ENCODE measurements at regions of chr10 and their contacts with region 1.

Region 1: GRCh38 chr10:70404036-70404786 is at the start of gene EIF4EBP2:
- DNase-seq: peak; percentile 95 to 99 (median 96)
- H3K4me3 ChIP-seq: peak within 1 kb of the TSS; percentile 32 to 78
- H3K4me3 Mint-ChIP-seq: peak within 1 kb of the TSS; percentile 92 to 98 (median 98)
- H3K27ac ChIP-seq: peak within 1 kb of the TSS; percentile 86
- H3K27ac Mint-ChIP-seq: peak within 1 kb of the TSS; percentile 87 to 97 (median 95)
- H3K4me1 ChIP-seq: peaks cover 32% of the 10 kb centered on the region
- H3K4me1 Mint-ChIP-seq: peaks cover 30 to 51% (median 40%) of the 10 kb centered on the region in 4 donors
- H3K27me3 ChIP-seq: no peaks in the 10 kb centered on the region
- H3K27me3 Mint-ChIP-seq: no peaks in the 10 kb centered on the region
- total RNA-seq, gene EIF4EBP2: 54.5 to 56.9 TPM

Region 2: DNA sequence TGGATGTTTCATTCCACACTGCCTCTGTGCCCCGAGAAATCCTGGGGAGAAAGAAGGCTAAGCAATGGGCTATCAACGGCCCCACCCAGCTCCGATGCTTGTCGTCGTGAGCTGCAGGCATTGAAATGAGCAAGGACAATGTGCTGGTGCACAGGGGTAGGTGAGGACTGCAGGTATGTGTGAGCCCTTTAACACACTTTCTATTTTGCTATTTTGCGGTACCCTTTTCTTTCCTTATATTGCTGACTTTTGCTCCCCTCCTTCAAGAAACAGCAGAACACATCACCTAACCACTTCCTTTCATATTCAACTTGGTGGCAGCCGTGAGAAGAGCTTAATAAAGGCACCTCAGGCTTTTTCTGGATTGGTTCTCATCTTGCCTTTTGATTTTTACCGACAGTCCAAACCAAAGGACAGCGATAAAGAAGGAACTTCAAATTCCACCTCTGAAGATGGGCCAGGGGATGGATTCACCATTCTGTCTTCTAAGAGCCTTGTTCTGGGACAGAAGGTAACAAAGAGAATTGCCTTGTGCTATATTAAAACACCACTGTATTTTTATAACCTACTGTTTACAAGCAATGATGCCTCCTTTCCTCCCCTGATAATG is 310.8 kb before region 1 on chr10:
- CTCF ChIA-PET with region 1: no interaction called
- POLR2A ChIA-PET with region 1: interaction called, 13 read pairs
- intact Hi-C with region 1: no loop called
- DNase-seq: peak; percentile 37 to 51 (median 44)
- H3K4me3 ChIP-seq: peak overlapping the region; percentile 26 to 62
- H3K4me3 Mint-ChIP-seq: peak overlapping the region; percentile 76 to 87 (median 84)
- H3K27ac ChIP-seq: peak overlapping the region; percentile 61
- H3K27ac Mint-ChIP-seq: peak overlapping the region; percentile 83 to 98 (median 94)
- H3K4me1 ChIP-seq: peaks cover 45% of the 10 kb centered on the region
- H3K4me1 Mint-ChIP-seq: peaks cover 25 to 46% (median 37%) of the 10 kb centered on the region in 4 donors
- H3K27me3 ChIP-seq: no peaks in the 10 kb centered on the region
- H3K27me3 Mint-ChIP-seq: no peaks in the 10 kb centered on the region

Region 3: DNA sequence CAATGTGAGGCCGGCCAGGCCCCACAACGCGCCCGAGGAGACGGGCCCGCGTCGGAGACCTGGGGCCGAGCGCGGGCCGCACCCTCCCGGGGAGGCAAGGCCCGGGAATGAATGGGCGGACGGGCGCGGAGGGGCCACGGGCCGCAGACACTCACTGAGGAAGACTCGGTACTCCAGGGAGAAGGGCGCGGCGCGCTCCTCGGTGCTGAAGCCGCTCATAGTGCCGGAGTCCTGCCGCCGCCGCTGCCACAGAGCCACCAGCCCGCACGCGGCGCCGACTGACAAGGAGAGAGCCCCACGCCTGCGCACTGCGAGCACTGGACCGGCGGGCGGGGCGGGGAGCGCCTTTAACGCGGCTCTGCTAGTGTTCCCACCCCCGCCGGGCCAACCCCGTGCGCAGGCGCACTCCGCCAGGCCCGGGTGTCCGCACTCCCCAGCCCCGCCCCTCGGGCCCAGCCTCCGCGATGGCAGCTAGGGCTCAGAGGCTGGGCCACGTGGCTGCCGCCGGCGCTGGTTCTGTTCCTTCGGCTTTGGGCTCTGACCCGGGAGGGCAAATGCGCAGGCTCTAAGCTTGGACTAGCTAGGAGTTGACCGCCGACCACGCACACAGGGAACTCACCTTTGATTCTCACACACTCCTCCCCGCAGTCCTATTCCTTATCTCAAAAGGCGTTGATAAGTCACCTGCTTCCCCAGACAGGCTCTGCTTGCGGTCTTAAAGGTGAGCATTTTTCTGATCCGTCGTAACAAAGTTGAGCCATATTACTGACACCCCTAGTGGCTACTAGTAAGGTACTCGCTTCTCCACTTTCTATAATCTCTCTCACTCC is 170.9 kb before region 1 on chr10 and contains the start of gene PPA1:
- CTCF ChIA-PET with region 1: interaction called, 4 read pairs
- POLR2A ChIA-PET with region 1: interaction called, 31 read pairs
- intact Hi-C with region 1: loop called (anchors 1 kb)
- DNase-seq: peak; percentile 98 to 100 (median 99)
- H3K4me3 ChIP-seq: peak within 1 kb of the TSS; percentile 67 to 77
- H3K4me3 Mint-ChIP-seq: peak within 1 kb of the TSS; percentile 89 to 94 (median 91)
- H3K27ac ChIP-seq: peak within 1 kb of the TSS; percentile 82
- H3K27ac Mint-ChIP-seq: peak within 1 kb of the TSS; percentile 88 to 97 (median 96)
- H3K4me1 ChIP-seq: peaks cover 20% of the 10 kb centered on the region
- H3K4me1 Mint-ChIP-seq: peaks cover 14 to 42% (median 29%) of the 10 kb centered on the region in 4 donors
- H3K27me3 ChIP-seq: no peaks in the 10 kb centered on the region
- H3K27me3 Mint-ChIP-seq: peaks cover 0 to 1% of the 10 kb centered on the region in 2 donors
- total RNA-seq, gene PPA1: 57.4 to 60.4 TPM

Region 4: GRCh38 chr10:70418229-70418628 is 14.0 kb after region 1 on chr10:
- CTCF ChIA-PET with region 1: interaction called, 3 read pairs
- POLR2A ChIA-PET with region 1: interaction called, 21 read pairs
- intact Hi-C with region 1: no loop called
- DNase-seq: no peak
- H3K4me3 ChIP-seq: no peak overlapping the region
- H3K4me3 Mint-ChIP-seq: peak overlapping the region in 1 of 8 donors; percentile 26
- H3K27ac ChIP-seq: no peak overlapping the region
- H3K27ac Mint-ChIP-seq: peak overlapping the region in 5 of 7 donors; percentile 19 to 72 (median 37)
- H3K4me1 ChIP-seq: peaks cover 9% of the 10 kb centered on the region
- H3K4me1 Mint-ChIP-seq: peaks cover 22 to 39% (median 30%) of the 10 kb centered on the region in 4 donors
- H3K27me3 ChIP-seq: no peaks in the 10 kb centered on the region
- H3K27me3 Mint-ChIP-seq: no peaks in the 10 kb centered on the region

Region 5: DNA sequence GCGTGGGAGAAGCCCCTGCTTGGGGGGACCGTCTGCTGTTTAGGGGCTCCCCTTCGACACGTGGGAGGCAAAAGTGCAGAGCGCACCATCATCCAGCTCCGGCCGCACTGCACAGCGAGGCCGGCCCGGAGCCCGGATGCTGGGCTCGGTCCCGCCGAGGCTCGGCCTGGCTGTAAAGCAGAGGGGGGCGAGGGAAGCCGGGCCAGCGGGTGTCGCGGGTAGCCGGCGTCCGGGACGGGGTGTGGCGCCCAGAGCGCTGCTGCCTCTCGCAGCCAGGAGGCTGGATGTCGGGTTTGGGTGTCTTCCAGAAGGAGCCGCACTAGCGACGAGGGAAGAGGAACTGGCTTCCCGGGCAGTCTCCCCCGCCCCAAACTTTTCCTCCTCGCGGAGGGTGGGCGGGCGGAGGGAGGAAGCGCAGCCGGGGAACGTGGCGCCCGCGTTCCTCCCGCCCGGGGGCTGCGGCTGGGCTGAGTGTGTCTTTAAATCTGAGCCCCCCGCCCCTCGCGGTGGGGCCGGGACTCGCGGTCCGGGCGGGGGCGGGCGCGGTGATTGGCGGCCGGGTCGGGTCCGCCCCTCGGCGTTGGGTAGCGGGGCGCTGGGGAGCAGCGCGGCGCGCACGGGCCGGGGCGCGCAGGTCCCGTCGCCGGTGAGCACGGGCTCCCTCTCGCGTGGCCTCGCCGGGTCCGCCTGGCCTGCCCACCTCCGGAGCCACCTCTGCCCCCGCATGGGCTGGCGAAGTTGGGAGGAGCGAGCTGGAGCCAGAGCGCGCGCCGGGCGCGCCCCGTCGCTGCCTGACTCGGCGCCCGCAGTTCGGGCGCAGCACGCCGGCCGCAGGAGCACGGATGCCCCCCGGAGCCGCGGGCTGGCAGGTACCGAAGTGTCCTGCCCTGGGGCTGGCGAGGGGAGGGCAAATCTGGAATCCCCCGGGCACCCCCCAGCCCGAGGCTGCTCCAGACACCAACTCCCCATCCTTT is 74.3 kb after region 1 on chr10 and contains the start of gene PALD1:
- CTCF ChIA-PET with region 1: no interaction called
- POLR2A ChIA-PET with region 1: interaction called, 11 read pairs
- intact Hi-C with region 1: loop called (anchors 5 kb)
- DNase-seq: peak in 3 of 5 donors; percentile 17 to 51 (median 22)
- H3K4me3 ChIP-seq: peak within 1 kb of the TSS in 1 of 2 donors; percentile 33
- H3K4me3 Mint-ChIP-seq: peak within 1 kb of the TSS; percentile 79 to 92 (median 80)
- H3K27ac ChIP-seq: no peak within 1 kb of the TSS
- H3K27ac Mint-ChIP-seq: peak within 1 kb of the TSS; percentile 68 to 95 (median 89)
- H3K4me1 ChIP-seq: peaks cover 50% of the 10 kb centered on the region
- H3K4me1 Mint-ChIP-seq: peaks cover 27 to 58% (median 45%) of the 10 kb centered on the region in 4 donors
- H3K27me3 ChIP-seq: no peaks in the 10 kb centered on the region
- H3K27me3 Mint-ChIP-seq: peaks cover 1 to 2% of the 10 kb centered on the region in 2 donors
- total RNA-seq, gene PALD1: not detected

Measured in CD4-positive, alpha-beta memory T cell (primary cell).